ENCODE measurements at regions of chr1 and their contacts with region 1.

Region 1: GRCh38 chr1:33455539-33456501 is 16.6 kb upstream of the ZSCAN20 start:
- DNase-seq: peak; percentile 86
- H3K4me3 Mint-ChIP-seq: no peak overlapping the region
- H3K27ac Mint-ChIP-seq: no peak overlapping the region
- H3K4me1 Mint-ChIP-seq: peaks cover 34% of the 10 kb centered on the region
- H3K27me3 Mint-ChIP-seq: no peaks in the 10 kb centered on the region
- CTCF ChIP-seq: peak; percentile 64

Region 2: DNA sequence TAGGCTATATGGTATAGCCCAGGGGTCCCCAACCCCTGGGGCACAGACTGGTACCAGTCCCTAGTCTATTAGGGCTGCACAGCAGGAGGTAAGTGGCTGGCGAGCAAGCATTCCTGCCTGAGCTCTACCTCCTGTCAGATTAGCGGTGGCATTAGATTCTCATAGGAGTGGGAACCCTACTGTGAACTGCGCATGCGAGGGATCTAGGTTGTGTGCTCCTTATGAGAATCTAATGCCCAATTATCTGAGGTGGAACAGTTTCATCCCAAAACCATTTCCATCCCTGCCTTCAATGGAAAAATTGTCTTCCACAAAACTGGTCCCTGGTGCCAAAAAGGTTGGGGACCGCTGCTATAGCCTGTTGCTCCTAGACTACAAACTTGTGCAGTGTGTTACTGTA is 939.4 kb before region 1 on chr1:
- CTCF ChIA-PET with region 1: no interaction called
- POLR2A ChIA-PET with region 1: no interaction called
- intact Hi-C with region 1: no loop called
- DNase-seq: no peak
- H3K4me3 Mint-ChIP-seq: no peak overlapping the region
- H3K27ac Mint-ChIP-seq: no peak overlapping the region
- H3K4me1 Mint-ChIP-seq: peaks cover 5% of the 10 kb centered on the region
- H3K27me3 Mint-ChIP-seq: no peaks in the 10 kb centered on the region
- CTCF ChIP-seq: no peak

Region 3: GRCh38 chr1:33111970-33112369 is 343.9 kb before region 1 on chr1:
- CTCF ChIA-PET with region 1: interaction called, 5 read pairs
- POLR2A ChIA-PET with region 1: no interaction called
- intact Hi-C with region 1: loop called (anchors 5 kb)
- DNase-seq: peak; percentile 29
- H3K4me3 Mint-ChIP-seq: no peak overlapping the region
- H3K27ac Mint-ChIP-seq: no peak overlapping the region
- H3K4me1 Mint-ChIP-seq: no peaks in the 10 kb centered on the region
- H3K27me3 Mint-ChIP-seq: no peaks in the 10 kb centered on the region
- CTCF ChIP-seq: peak; percentile 27

Region 4: GRCh38 chr1:33367485-33368405 is 88.1 kb before region 1 on chr1:
- CTCF ChIA-PET with region 1: interaction called, 6 read pairs
- POLR2A ChIA-PET with region 1: no interaction called
- intact Hi-C with region 1: loop called (anchors 2 kb)
- DNase-seq: peak; percentile 84
- H3K4me3 Mint-ChIP-seq: no peak overlapping the region
- H3K27ac Mint-ChIP-seq: no peak overlapping the region
- H3K4me1 Mint-ChIP-seq: peaks cover 6% of the 10 kb centered on the region
- H3K27me3 Mint-ChIP-seq: no peaks in the 10 kb centered on the region
- CTCF ChIP-seq: peak; percentile 95

Region 5: GRCh38 chr1:33430692-33431593 is 24.9 kb before region 1 on chr1 and contains the start of gene PHC2:
- CTCF ChIA-PET with region 1: interaction called, 13 read pairs
- POLR2A ChIA-PET with region 1: no interaction called
- intact Hi-C with region 1: loop called (anchors 2 kb)
- DNase-seq: peak; percentile 97
- H3K4me3 Mint-ChIP-seq: no peak within 1 kb of the TSS
- H3K27ac Mint-ChIP-seq: no peak within 1 kb of the TSS
- H3K4me1 Mint-ChIP-seq: peaks cover 21% of the 10 kb centered on the region
- H3K27me3 Mint-ChIP-seq: no peaks in the 10 kb centered on the region
- CTCF ChIP-seq: no peak
- total RNA-seq, gene PHC2: 117 and 137 TPM in 2 replicates

Measured in MCF 10A (cell line).